ENCODE measurements at regions of chr9 and their contacts with region 1.

Region 1: DNA sequence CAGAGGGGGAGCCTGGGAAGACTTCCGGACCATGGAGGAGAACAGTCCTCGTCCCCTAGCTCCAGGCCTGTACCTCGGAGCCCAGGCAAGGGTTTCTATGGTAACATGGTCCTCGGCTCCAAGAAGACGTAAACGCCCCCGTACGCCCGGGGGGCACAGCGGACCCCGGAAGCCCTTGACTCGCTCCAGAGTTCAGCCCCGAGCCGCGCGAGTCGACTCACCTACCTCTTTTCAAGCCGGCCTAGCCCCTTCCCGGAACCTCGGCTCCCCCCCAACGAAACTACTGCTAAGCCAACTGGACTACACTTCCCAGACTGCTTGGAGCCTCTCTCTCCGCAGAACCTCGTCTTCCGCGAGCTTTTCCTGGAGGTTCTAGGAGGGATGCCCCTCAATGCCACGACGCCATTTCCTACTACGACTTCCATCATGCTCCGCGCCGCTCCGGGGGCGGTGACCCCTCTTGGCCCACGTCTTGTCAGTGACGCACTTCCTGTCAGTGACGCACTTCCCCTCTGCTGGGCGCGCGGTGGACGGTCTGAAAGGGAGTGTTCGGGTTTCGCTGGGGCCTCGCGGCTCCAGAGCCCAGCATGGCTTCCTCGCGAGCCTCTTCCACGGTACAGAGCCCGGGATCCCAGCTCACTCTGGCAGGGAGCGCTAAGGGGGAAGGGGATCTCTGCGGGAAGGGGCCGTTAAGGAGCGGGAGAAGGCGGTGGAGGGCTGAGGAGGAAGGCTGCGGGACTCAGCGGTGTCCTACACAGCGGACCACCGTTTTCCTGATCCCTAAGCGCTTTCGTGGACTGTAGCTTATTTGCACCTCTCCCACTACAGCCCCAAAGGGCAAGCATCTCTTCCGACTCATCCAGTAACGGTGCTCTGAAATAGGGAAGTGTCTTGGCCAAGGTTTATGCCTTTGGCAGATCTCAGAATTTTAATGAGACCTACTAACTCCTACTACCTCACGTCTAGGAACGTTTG is at the starts of genes CDC26 and PRPF4:
- DNase-seq: peak; percentile 85 to 95 (median 93)
- ATAC-seq: peak; percentile 97
- H3K4me3 ChIP-seq: peak within 1 kb of the TSS; percentile 87
- H3K4me3 Mint-ChIP-seq: no peak within 1 kb of the TSS
- H3K27ac ChIP-seq: peak within 1 kb of the TSS; percentile 98
- H3K27ac Mint-ChIP-seq: no peak within 1 kb of the TSS
- H3K4me1 ChIP-seq: peaks cover 8 to 16% of the 10 kb centered on the region in 2 donors
- H3K4me1 Mint-ChIP-seq: peaks cover 13 to 42% (median 34%) of the 10 kb centered on the region in 7 donors
- H3K27me3 ChIP-seq: no peaks in the 10 kb centered on the region
- H3K27me3 Mint-ChIP-seq: no peaks in the 10 kb centered on the region
- total RNA-seq, gene CDC26: 21.7 to 40.3 (median 34.4) TPM
- total RNA-seq, gene PRPF4: 17.4 to 36.9 (median 22.0) TPM

Region 2: GRCh38 chr9:111483862-111484571 is 1791.4 kb before region 1 on chr9 and contains the start of gene ECPAS:
- CTCF ChIA-PET with region 1: no interaction called
- POLR2A ChIA-PET with region 1: no interaction called
- intact Hi-C with region 1: loop called in 1 of 2 experiments (anchors 2 kb)
- DNase-seq: peak; percentile 53 to 78 (median 62)
- ATAC-seq: peak; percentile 74
- H3K4me3 ChIP-seq: peak within 1 kb of the TSS; percentile 66
- H3K4me3 Mint-ChIP-seq: peak within 1 kb of the TSS; percentile 69 to 93 (median 88)
- H3K27ac ChIP-seq: peak within 1 kb of the TSS; percentile 74
- H3K27ac Mint-ChIP-seq: peak within 1 kb of the TSS; percentile 60 to 92 (median 85)
- H3K4me1 ChIP-seq: peaks cover 0 to 8% of the 10 kb centered on the region in 2 donors
- H3K4me1 Mint-ChIP-seq: peaks cover 16 to 31% (median 27%) of the 10 kb centered on the region in 7 donors
- H3K27me3 ChIP-seq: no peaks in the 10 kb centered on the region
- H3K27me3 Mint-ChIP-seq: peaks cover 0 to 13% (median 5%) of the 10 kb centered on the region in 5 donors
- total RNA-seq, gene ECPAS: 35.4 to 86.1 (median 49.2) TPM

Region 3: GRCh38 chr9:113221003-113221799 is 54.2 kb before region 1 on chr9 and contains the starts of genes FKBP15 and SLC31A1:
- CTCF ChIA-PET with region 1: interaction called, 5 read pairs
- POLR2A ChIA-PET with region 1: interaction called, 4 read pairs
- intact Hi-C with region 1: loop called (anchors 1 kb)
- DNase-seq: peak; percentile 88 to 96 (median 96)
- ATAC-seq: peak; percentile 99
- H3K4me3 ChIP-seq: peak within 1 kb of the TSS; percentile 91
- H3K4me3 Mint-ChIP-seq: peak within 1 kb of the TSS; percentile 89 to 99 (median 94)
- H3K27ac ChIP-seq: peak within 1 kb of the TSS; percentile 94
- H3K27ac Mint-ChIP-seq: peak within 1 kb of the TSS; percentile 86 to 98 (median 94)
- H3K4me1 ChIP-seq: peaks cover 10 to 25% of the 10 kb centered on the region in 2 donors
- H3K4me1 Mint-ChIP-seq: peaks cover 15 to 58% (median 48%) of the 10 kb centered on the region in 7 donors
- H3K27me3 ChIP-seq: no peaks in the 10 kb centered on the region
- H3K27me3 Mint-ChIP-seq: no peaks in the 10 kb centered on the region
- total RNA-seq, gene FKBP15: 22.4 to 50.6 (median 33.4) TPM
- total RNA-seq, gene SLC31A1: 4.5 to 10.4 (median 4.7) TPM

Region 4: DNA sequence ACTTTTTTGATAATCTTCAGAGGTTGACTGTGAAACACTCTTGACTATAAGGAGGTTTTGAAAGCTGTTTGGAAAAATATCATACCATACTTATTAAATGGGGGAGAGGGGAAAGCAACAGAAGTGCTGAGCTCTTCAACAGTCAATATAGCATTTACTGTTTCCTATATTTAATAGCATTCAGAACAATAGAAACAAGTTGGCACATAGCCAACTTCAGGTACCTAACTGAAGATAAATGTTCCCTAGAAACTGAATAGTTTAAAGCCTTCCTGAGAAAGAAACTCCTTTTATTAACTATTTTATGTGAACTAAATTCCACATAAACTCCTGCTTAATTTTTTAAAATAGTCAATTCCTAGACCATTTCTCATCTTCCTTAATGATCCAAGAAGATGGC is 27.8 kb before region 1 on chr9:
- CTCF ChIA-PET with region 1: no interaction called
- POLR2A ChIA-PET with region 1: no interaction called
- intact Hi-C with region 1: no loop called
- DNase-seq: no peak
- ATAC-seq: no peak
- H3K4me3 ChIP-seq: no peak overlapping the region
- H3K4me3 Mint-ChIP-seq: no peak overlapping the region
- H3K27ac ChIP-seq: no peak overlapping the region
- H3K27ac Mint-ChIP-seq: no peak overlapping the region
- H3K4me1 ChIP-seq: no peaks in the 10 kb centered on the region
- H3K4me1 Mint-ChIP-seq: peaks cover 0 to 2% (median 0%) of the 10 kb centered on the region in 7 donors
- H3K27me3 ChIP-seq: no peaks in the 10 kb centered on the region
- H3K27me3 Mint-ChIP-seq: no peaks in the 10 kb centered on the region

Region 5: GRCh38 chr9:113349445-113350094 is 74.1 kb after region 1 on chr9 and contains the start of gene BSPRY:
- CTCF ChIA-PET with region 1: interaction called, 3 read pairs
- POLR2A ChIA-PET with region 1: interaction called, 3 read pairs
- intact Hi-C with region 1: loop called in 1 of 2 experiments (anchors 1 kb)
- DNase-seq: peak in 7 of 9 donors; percentile 27 to 67 (median 44)
- ATAC-seq: peak; percentile 70
- H3K4me3 ChIP-seq: peak within 1 kb of the TSS; percentile 54
- H3K4me3 Mint-ChIP-seq: peak within 1 kb of the TSS; percentile 73 to 93 (median 81)
- H3K27ac ChIP-seq: no peak within 1 kb of the TSS
- H3K27ac Mint-ChIP-seq: peak within 1 kb of the TSS in 3 of 9 donors; percentile 5 to 87 (median 57)
- H3K4me1 ChIP-seq: peaks cover 13 to 15% of the 10 kb centered on the region in 2 donors
- H3K4me1 Mint-ChIP-seq: peaks cover 10 to 49% (median 21%) of the 10 kb centered on the region in 7 donors
- H3K27me3 ChIP-seq: peaks cover 3 to 5% of the 10 kb centered on the region in 2 donors
- H3K27me3 Mint-ChIP-seq: peaks cover 0 to 40% (median 29%) of the 10 kb centered on the region in 5 donors
- total RNA-seq, gene BSPRY: 0.13 to 9.6 (median 1.2) TPM in 3 of 5 experiments, not detected in the others

Region 6: GRCh38 chr9:113511856-113512761 is 236.7 kb after region 1 on chr9:
- CTCF ChIA-PET with region 1: interaction called, 4 read pairs
- POLR2A ChIA-PET with region 1: no interaction called
- intact Hi-C with region 1: loop called (anchors 1 to 2 kb)
- DNase-seq: peak; percentile 17 to 82 (median 40)
- ATAC-seq: peak; percentile 74
- H3K4me3 ChIP-seq: peak overlapping the region; percentile 42
- H3K4me3 Mint-ChIP-seq: peak overlapping the region; percentile 72 to 88 (median 84)
- H3K27ac ChIP-seq: peak overlapping the region; percentile 64
- H3K27ac Mint-ChIP-seq: peak overlapping the region; percentile 85 to 97 (median 94)
- H3K4me1 ChIP-seq: peaks cover 43 to 57% of the 10 kb centered on the region in 2 donors
- H3K4me1 Mint-ChIP-seq: peaks cover 41 to 69% (median 60%) of the 10 kb centered on the region in 7 donors
- H3K27me3 ChIP-seq: no peaks in the 10 kb centered on the region
- H3K27me3 Mint-ChIP-seq: no peaks in the 10 kb centered on the region

Region 7: DNA sequence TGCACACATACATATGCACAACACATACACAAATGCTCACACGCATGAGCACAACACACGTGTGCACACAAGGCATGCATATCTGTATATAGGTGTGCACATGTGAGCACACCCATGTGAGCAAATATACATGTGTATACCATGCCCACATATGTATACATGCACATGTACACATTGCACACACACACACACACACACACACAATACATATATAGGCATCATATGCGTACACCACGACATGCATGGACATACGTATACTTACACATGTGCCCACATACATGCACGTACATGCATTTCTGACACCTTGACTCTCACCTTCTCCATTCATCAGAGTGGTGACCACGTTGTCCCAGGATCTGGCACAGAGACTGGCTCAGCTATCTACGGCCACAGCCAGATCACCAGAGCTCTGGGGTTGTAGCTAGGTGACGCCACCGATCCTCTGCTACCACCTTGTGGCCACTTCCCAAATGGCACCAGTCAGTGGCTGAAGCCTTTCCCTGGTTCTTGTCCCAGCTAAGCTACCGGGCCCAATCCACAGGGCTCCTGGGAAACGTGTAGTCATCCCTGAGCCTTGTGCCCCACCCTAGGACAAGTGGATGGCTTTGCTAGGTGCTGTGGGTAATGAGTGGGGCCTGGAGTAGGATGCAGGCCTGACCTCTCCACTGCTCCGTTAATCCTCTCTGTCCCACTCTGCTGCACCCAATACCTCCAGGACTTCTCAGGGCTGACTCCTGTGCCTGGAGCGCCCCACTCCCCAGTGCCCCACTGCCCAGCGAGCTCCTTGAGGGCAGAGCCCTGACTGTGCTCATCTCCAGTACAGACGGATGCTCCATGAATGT is 382.5 kb after region 1 on chr9:
- CTCF ChIA-PET with region 1: interaction called, 48 read pairs
- POLR2A ChIA-PET with region 1: no interaction called
- intact Hi-C with region 1: loop called (anchors 1 kb)
- DNase-seq: peak; percentile 43 to 82 (median 66)
- ATAC-seq: peak; percentile 91
- H3K4me3 ChIP-seq: no peak overlapping the region
- H3K4me3 Mint-ChIP-seq: no peak overlapping the region
- H3K27ac ChIP-seq: no peak overlapping the region
- H3K27ac Mint-ChIP-seq: peak overlapping the region in 1 of 9 donors; percentile 47
- H3K4me1 ChIP-seq: no peaks in the 10 kb centered on the region
- H3K4me1 Mint-ChIP-seq: peaks cover 0 to 9% (median 2%) of the 10 kb centered on the region in 7 donors
- H3K27me3 ChIP-seq: no peaks in the 10 kb centered on the region
- H3K27me3 Mint-ChIP-seq: peaks cover 9 to 23% (median 21%) of the 10 kb centered on the region in 5 donors